ENCODE measurements at regions of chr22 and their contacts with region 1.

Region 1: DNA sequence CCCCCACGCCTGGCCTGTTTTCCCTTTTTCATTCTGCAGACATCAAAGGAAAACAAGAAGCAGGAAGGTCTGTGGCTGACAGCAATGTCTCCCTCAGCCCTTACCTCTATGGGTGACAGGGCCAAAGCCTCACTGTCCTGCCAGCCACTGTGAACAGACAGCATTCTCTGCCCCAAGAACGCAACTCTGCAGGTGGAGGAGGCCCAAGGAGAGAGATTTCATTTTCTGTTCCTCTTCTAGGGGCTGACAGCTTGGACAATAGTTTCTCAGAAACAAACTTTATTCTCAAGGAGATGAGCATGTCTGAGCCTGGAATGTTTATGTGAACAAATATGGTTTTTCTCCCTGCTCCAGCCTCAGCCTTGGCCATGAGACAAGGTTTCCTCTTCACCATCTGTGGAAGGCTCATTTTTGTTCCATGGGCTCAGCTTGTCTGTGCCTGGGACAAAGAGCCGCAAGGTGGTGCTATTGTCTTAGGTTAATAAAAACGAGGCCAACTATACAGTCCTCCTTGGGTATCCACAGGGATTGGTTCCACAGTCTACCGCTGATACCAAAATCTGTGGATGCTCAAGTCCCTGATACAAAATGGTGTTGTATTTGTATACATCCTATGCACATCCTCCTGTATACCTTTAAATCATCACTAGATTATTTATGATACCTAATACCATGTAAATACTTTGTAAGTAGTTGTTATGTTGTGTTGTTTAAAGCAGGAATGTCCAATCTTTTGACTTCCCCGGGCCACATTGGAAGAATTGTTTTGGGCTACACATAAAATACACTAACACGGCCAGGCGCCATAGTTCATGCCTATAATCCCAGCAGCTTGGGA is 5.8 kb downstream of the PIWIL3 start:
- DNase-seq: peak in 1 of 2 donors; percentile 18
- ATAC-seq: peak; percentile 49 to 78 (median 74)
- H3K4me3 ChIP-seq: no peak overlapping the region
- H3K27ac ChIP-seq: no peak overlapping the region
- H3K4me1 ChIP-seq: no peaks in the 10 kb centered on the region
- H3K27me3 ChIP-seq: peaks cover 0 to 24% (median 5%) of the 10 kb centered on the region in 3 donors
- CTCF ChIP-seq: peak; percentile 56

Region 2: DNA sequence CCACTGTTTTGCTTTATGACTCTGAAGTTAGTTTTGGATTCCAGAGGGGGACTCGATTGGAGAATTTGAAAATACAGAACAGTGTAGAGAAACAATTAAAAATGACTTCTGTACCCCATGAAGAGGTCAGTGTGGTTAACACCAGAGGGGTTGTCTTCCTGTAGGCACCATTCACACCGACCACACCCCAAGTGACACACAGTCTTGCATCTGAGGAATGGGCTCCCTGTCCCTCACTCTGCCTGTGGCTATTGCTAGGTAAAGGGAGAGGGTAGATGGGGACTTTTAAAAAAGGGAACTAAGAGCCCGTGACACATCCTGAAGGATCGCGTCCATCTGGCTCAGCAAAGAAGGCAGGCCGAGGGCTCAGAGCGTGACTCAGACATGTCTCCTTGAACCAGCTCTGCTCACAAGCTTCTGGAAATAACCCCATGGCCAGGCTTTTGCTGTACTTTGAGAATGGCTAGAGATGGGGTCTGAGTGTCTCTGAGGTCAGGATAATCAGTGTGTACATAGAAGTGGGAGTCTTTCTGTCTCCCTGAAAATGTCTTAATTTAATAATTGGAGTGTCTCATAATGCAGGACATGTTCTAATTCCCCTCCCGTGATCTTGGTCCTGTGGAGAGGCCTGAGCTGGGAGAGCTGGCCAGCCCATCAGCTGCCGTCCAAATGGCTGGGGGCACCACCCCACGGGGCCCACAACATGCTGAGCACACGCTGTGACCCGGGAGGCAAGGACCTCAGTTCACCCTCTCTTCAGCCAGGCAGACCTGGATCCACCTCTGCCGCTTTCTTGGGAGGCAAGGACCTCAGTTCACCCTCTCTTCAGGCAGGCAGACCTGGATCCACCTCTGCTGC is 76.5 kb after region 1 on chr22:
- intact Hi-C with region 1: loop called (anchors 1 to 5 kb)
- DNase-seq: peak; percentile 38 to 59
- ATAC-seq: peak; percentile 44 to 84 (median 74)
- H3K4me3 ChIP-seq: no peak overlapping the region
- H3K27ac ChIP-seq: no peak overlapping the region
- H3K4me1 ChIP-seq: no peaks in the 10 kb centered on the region
- H3K27me3 ChIP-seq: peaks cover 0 to 4% (median 0%) of the 10 kb centered on the region in 3 donors
- CTCF ChIP-seq: no peak

Region 3: GRCh38 chr22:25048659-25049647 is 280.2 kb after region 1 on chr22:
- intact Hi-C with region 1: loop called (anchors 5 to 10 kb)
- DNase-seq: peak; percentile 56 to 74
- ATAC-seq: peak; percentile 78 to 85 (median 84)
- H3K4me3 ChIP-seq: no peak overlapping the region
- H3K27ac ChIP-seq: no peak overlapping the region
- H3K4me1 ChIP-seq: no peaks in the 10 kb centered on the region
- H3K27me3 ChIP-seq: no peaks in the 10 kb centered on the region
- CTCF ChIP-seq: peak; percentile 86

Region 4: DNA sequence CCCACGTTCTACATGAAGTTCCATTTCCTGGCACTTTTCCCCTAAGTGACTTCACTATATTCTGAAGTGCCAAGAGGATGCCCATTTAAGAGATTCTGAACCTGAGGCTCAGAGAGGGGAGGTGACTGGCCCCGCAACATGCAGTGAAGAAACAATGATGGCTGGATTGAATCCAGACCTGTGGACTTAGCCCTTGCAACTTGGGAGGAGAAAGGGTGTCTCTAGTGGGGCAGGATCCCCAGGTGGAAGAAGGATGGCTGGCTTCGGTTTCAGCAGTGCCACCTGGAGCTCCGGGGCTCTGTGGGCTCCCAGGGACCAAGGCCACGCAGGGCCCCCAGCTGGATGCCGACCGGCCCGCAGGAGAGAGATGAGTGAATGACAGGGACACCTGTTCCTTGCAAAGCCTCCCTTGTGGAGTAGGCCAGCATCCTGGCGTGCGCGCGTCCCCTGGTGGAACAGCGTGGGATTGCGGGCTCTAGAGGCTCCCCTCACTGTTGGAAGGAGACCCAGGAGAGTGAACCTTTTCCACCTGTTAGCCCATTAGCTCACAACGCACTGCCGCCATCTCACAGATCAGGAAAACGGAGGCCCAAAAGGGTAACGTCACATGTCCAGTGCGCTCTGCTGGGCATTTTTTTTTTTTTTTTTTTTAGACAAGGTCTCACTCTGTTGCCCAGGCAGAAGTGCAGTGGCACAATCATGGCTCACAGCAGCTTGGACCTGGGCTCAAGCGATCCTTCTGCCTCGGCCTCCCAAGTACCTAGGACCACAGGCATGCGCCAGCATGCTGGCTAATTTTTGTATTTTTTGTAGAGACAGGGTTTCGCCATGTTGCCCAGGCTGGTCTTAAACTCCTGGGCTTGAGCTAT is 288.5 kb after region 1 on chr22:
- intact Hi-C with region 1: loop called (anchors 5 to 10 kb)
- DNase-seq: peak; percentile 55 to 84
- ATAC-seq: peak; percentile 84 to 93 (median 90)
- H3K4me3 ChIP-seq: no peak overlapping the region
- H3K27ac ChIP-seq: no peak overlapping the region
- H3K4me1 ChIP-seq: peaks cover 7% of the 10 kb centered on the region
- H3K27me3 ChIP-seq: no peaks in the 10 kb centered on the region
- CTCF ChIP-seq: peak; percentile 82

Measured in psoas muscle (tissue), 8 donors.